Activated B cell treated with CpG ODN at 0.5 μM for 24 hours (primary cell): ENCODE measurements at regions of chr19 and their contacts with region 1.

Region 1: DNA sequence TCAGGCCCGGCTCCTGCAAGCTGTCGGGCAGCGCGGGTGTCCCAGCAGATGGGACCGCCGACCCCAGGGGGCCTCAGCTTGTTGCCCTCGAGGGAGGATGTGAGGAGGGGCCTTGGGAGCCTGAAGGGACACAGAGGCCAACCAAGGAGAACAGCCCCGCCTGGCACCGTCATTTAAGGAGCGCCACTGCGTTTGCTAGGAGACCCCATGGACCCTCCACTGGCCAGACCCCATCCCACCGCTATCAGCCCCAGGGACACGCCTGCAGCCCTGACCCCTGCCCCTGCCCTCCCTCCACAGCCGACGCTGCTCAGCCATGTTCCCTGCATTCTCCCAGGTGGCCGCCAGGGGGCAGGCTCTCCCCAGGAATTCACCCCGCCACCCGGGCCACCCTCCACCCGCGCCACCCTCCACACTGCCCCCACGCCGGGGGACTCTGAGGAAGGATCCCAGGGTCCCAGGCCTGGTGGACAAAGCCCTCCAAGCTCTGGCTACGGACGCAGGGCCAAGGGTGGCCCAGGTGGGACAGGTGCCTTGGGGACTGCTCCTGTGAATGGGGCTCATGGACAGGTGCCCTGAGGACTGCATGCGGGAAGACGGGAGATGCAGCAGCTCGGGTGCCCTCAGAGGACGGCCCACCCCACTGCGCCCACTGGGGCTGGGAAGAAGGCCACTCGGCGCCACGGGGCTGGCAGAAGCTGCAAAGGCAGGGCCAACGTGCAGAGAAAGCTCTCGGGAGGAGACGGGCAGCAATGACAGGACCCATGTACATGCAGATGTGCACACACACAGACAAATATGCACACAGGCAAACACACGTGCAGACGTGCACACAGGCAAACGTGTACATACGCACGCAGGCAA is 34.4 kb downstream of the PIP5K1C start:
- DNase-seq: peak; percentile 83
- ATAC-seq: peak; percentile 90
- H3K4me3 Mint-ChIP-seq: peak overlapping the region; percentile 64
- H3K27ac Mint-ChIP-seq: peak overlapping the region; percentile 59
- H3K4me1 Mint-ChIP-seq: peaks cover 34% of the 10 kb centered on the region
- H3K27me3 Mint-ChIP-seq: no peaks in the 10 kb centered on the region
- CTCF ChIP-seq: peak; percentile 40

Region 2: GRCh38 chr19:3700221-3701032 is 34.5 kb after region 1 on chr19 and contains the start of gene PIP5K1C:
- CTCF ChIA-PET with region 1: interaction called, 15 read pairs
- POLR2A ChIA-PET with region 1: interaction called, 7 read pairs
- intact Hi-C with region 1: loop called (anchors 1 kb)
- DNase-seq: peak; percentile 96
- ATAC-seq: peak; percentile 98
- H3K4me3 Mint-ChIP-seq: peak within 1 kb of the TSS; percentile 89
- H3K27ac Mint-ChIP-seq: peak within 1 kb of the TSS; percentile 65
- H3K4me1 Mint-ChIP-seq: peaks cover 37% of the 10 kb centered on the region
- H3K27me3 Mint-ChIP-seq: no peaks in the 10 kb centered on the region
- CTCF ChIP-seq: no peak
- total RNA-seq, gene PIP5K1C: 28.3 and 31.1 TPM in 2 replicates

Region 3: DNA sequence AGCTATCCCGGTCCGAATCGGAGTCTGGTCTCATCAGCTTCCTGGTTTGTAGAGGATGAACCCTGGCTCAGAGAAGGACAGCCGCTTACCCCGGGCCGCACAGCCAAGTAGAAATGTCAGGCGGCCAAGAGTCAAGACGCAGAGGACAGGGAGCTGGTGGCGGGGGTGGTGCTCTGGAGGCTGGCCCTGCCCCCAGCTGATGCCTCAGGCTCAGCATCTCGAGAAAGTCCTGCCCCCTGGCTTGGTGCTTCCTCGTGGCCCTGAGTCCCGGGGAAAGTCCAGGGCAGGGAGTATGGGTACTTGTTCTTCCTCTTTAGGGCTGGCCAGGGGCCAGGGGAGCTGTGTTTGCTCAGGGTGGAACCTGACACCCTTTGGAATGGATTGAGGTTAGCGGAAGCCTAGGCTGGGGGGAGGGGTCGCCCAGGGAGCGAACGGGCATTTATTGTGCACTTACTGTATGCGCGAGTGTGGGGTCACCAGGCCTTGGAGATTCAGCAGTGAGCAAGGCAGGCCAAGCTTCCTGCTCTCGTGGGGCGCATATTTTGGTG is 44.4 kb after region 1 on chr19:
- CTCF ChIA-PET with region 1: interaction called, 7 read pairs
- POLR2A ChIA-PET with region 1: no interaction called
- intact Hi-C with region 1: loop called (anchors 1 kb)
- DNase-seq: no peak
- ATAC-seq: no peak
- H3K4me3 Mint-ChIP-seq: no peak overlapping the region
- H3K27ac Mint-ChIP-seq: no peak overlapping the region
- H3K4me1 Mint-ChIP-seq: peaks cover 6% of the 10 kb centered on the region
- H3K27me3 Mint-ChIP-seq: peaks cover 8% of the 10 kb centered on the region
- CTCF ChIP-seq: no peak

Region 4: DNA sequence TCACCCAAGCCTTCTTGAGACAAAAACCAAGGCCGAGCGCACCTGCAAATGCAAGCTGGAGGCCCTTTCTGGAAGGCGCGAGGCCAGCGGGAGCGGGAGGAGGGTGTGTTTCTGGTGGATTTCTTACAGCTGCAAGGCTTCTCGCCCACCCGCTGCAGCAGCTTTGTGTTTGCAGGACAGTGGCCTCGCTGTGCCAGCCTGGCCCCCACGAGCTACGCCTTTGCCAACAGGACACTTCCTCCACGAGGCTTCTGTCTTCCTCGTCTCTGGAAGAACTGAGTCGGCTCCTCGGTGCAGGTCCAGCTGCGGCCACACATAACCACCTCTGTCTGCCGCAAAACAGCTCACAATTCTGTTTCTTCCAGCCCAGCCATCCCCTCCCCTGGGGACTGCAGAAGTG is 224.7 kb after region 1 on chr19:
- CTCF ChIA-PET with region 1: no interaction called
- POLR2A ChIA-PET with region 1: no interaction called
- intact Hi-C with region 1: no loop called
- DNase-seq: no peak
- ATAC-seq: no peak
- H3K4me3 Mint-ChIP-seq: no peak overlapping the region
- H3K27ac Mint-ChIP-seq: no peak overlapping the region
- H3K4me1 Mint-ChIP-seq: no peaks in the 10 kb centered on the region
- H3K27me3 Mint-ChIP-seq: peaks cover 4% of the 10 kb centered on the region
- CTCF ChIP-seq: no peak

Region 5: DNA sequence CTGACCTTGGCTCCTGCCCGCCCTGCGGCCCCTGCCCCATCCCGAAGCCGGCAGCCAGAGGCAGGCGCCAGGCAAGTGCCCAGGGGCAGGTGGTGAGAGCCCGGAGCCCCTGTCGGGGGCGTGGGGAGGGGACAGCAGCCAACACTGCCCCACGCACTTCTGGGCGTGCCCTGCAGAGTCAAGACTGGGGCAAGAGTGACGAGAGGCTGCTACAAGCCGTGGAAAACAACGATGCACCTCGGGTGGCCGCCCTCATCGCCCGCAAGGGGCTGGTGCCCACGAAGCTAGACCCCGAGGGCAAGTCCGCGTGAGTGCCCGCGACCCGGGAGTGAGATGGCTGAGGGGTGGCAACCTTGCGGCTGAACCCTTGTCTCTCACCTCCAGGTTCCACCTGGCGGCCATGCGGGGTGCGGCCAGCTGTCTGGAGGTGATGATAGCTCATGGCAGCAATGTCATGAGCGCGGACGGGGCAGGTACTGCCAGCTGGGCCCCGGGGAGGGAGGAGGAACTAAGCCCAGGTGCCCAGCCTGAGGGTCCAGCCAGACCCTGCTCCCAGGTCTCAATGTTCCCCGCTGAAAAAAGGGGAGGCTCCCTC is 533.9 kb after region 1 on chr19:
- CTCF ChIA-PET with region 1: no interaction called
- POLR2A ChIA-PET with region 1: no interaction called
- intact Hi-C with region 1: loop called (anchors 5 kb)
- DNase-seq: no peak
- ATAC-seq: no peak
- H3K4me3 Mint-ChIP-seq: no peak overlapping the region
- H3K27ac Mint-ChIP-seq: no peak overlapping the region
- H3K4me1 Mint-ChIP-seq: peaks cover 16% of the 10 kb centered on the region
- H3K27me3 Mint-ChIP-seq: peaks cover 34% of the 10 kb centered on the region
- CTCF ChIP-seq: no peak